ENCODE measurements at regions of chr17 and their contacts with region 1.

Region 1: DNA sequence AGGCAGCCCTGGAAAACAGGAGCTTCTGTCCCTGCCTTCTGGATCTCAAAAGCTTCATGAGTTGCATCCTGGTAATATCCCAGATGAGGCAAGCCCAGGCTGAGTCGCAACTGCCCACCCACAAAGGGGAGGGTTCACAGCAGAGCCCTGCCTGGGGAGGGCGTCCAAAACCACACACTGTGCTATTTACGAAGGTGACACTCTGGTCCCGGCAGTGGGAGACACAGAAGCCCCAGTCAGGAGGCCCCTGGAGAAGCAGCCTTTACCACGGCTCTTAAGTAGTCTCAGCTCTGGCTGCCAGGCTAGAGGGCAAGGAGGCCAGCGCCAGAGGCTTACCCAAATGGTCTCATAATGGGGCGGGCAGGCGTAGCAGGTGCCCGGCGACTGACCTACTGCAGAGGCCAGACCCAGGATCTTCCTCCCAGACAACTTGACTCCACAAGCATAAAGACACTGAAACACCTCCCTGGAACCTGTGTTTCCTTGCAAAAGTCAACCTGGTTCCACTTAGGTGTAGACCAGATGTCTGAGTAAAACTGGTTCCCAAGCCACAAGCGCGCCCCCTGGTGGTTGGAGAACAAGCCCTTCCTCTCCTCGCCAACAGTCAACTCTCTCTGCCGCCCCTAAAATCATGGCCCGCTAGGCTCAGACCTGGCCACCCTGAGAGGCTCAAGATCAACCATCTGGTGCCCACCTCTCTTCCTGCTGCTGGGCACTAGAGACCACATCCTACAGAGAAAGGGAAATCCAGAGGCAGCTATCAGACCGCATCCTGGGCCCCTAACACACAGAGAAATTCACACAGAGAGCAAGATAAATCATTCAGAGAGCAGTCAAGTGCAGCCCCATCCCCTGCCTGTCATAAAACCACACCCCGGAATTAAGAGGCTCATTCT is 5.2 kb downstream of the AXIN2 start:
- DNase-seq: peak; percentile 85 to 96 (median 92)
- ATAC-seq: peak; percentile 43
- H3K4me3 ChIP-seq: peak overlapping the region; percentile 66
- H3K4me3 Mint-ChIP-seq: no peak overlapping the region
- H3K27ac ChIP-seq: peak overlapping the region; percentile 31 to 36
- H3K27ac Mint-ChIP-seq: no peak overlapping the region
- H3K4me1 ChIP-seq: peaks cover 12% of the 10 kb centered on the region
- H3K4me1 Mint-ChIP-seq: peaks cover 18% of the 10 kb centered on the region
- H3K27me3 ChIP-seq: no peaks in the 10 kb centered on the region
- H3K27me3 Mint-ChIP-seq: no peaks in the 10 kb centered on the region
- CTCF ChIP-seq: peak; percentile 81

Region 2: GRCh38 chr17:65334406-65334805 is 221.9 kb before region 1 on chr17:
- CTCF ChIA-PET with region 1: no interaction called
- POLR2A ChIA-PET with region 1: no interaction called
- intact Hi-C with region 1: no loop called
- DNase-seq: no peak
- ATAC-seq: no peak
- H3K4me3 ChIP-seq: no peak overlapping the region
- H3K4me3 Mint-ChIP-seq: no peak overlapping the region
- H3K27ac ChIP-seq: no peak overlapping the region
- H3K27ac Mint-ChIP-seq: no peak overlapping the region
- H3K4me1 ChIP-seq: no peaks in the 10 kb centered on the region
- H3K4me1 Mint-ChIP-seq: no peaks in the 10 kb centered on the region
- H3K27me3 ChIP-seq: peaks cover 4% of the 10 kb centered on the region in 2 experiments
- H3K27me3 Mint-ChIP-seq: peaks cover 14% of the 10 kb centered on the region
- CTCF ChIP-seq: no peak

Region 3: DNA sequence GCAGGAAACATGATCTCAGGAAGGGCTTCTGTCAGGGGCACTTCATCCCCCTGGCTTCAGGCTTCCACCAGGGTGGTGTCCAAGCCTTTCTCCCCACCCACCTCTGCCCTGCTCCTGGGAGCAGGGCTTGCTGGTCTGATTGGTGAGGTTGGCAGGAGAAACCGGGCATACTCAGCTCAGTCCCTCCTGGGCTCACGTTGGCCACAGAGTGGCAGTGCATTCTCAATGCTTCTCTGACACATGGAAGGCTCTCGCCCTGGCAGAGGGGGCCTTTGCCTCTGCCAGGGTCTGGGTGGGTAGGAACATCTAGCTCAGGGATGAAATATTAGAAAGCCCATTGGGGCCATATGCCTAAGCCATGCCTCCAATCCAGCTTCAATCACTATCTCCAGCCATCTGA is 137.6 kb before region 1 on chr17:
- CTCF ChIA-PET with region 1: no interaction called
- POLR2A ChIA-PET with region 1: no interaction called
- intact Hi-C with region 1: loop called in 1 of 2 experiments (anchors 1 kb)
- DNase-seq: no peak
- ATAC-seq: no peak
- H3K4me3 ChIP-seq: no peak overlapping the region
- H3K4me3 Mint-ChIP-seq: no peak overlapping the region
- H3K27ac ChIP-seq: no peak overlapping the region
- H3K27ac Mint-ChIP-seq: no peak overlapping the region
- H3K4me1 ChIP-seq: no peaks in the 10 kb centered on the region
- H3K4me1 Mint-ChIP-seq: no peaks in the 10 kb centered on the region
- H3K27me3 ChIP-seq: no peaks in the 10 kb centered on the region
- H3K27me3 Mint-ChIP-seq: peaks cover 11% of the 10 kb centered on the region
- CTCF ChIP-seq: no peak

Region 4: DNA sequence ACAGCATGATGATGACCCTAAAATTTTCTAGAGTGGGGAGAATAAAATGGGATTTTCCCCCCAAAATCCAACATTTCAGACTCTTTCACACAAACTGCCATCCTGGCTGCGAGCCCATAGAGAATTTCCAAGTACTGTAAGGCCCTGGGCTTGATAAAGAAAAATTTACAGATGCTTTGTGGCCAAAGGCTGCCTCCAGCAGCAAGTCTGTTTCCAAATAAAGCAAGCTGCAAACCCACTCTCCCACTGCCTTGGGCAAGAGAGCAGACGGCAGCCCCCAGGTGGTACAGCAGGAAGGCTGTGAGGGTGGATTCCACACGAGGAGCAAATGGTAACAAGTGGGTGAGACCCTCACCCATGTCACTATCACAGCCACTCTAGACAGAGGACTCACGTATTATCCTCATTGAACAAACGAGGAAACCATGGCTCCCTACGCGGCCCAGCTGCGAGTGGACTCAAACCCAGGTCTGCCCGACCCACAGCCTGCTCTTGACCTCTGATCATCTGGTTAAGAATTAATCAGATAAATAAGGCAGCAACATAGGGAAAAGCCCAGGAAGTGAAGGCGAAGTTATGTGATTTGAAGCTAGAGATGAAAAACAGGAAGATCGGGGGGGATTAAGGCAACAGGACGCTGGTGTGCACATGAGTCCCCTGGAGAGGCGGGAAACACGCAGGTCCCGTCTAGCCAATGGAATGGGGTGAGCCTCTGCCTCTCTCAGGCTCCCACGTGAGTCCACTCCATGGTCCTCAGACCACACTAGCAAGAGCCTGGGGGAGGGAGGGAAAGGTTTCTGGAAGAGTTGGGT is 32.2 kb before region 1 on chr17:
- CTCF ChIA-PET with region 1: interaction called, 3 read pairs
- POLR2A ChIA-PET with region 1: interaction called, 3 read pairs
- intact Hi-C with region 1: loop called (anchors 1 to 2 kb)
- DNase-seq: peak in 3 of 14 experiments; percentile 8 to 28 (median 27)
- ATAC-seq: peak; percentile 13
- H3K4me3 ChIP-seq: no peak overlapping the region
- H3K4me3 Mint-ChIP-seq: peak overlapping the region; percentile 26
- H3K27ac ChIP-seq: peak overlapping the region; percentile 16 to 36
- H3K27ac Mint-ChIP-seq: peak overlapping the region; percentile 86
- H3K4me1 ChIP-seq: peaks cover 32% of the 10 kb centered on the region
- H3K4me1 Mint-ChIP-seq: peaks cover 49% of the 10 kb centered on the region
- H3K27me3 ChIP-seq: no peaks in the 10 kb centered on the region
- H3K27me3 Mint-ChIP-seq: no peaks in the 10 kb centered on the region
- CTCF ChIP-seq: no peak

Region 5: DNA sequence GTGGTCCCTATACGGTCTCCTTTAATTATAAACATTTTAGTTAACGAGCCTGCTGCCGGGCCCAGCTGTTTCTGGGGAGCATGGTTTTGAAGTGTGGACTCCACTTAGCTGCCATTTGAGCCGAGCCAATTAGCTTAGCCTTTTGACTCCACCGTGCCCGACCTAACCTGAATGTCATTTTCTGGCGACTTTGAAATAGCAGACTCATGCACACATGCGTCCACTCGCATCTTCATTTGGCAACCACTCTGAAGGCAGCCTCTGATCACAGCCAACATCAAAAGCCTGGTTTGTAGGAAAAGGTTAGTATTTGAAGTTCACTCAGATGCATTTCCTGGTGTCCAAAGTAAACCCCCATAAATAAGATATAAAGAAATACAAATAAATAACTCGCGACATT is 11.6 kb before region 1 on chr17:
- CTCF ChIA-PET with region 1: interaction called, 17 read pairs
- POLR2A ChIA-PET with region 1: interaction called, 21 read pairs
- intact Hi-C with region 1: loop called in 1 of 2 experiments (anchors 2 kb)
- DNase-seq: no peak
- ATAC-seq: no peak
- H3K4me3 ChIP-seq: no peak overlapping the region
- H3K4me3 Mint-ChIP-seq: no peak overlapping the region
- H3K27ac ChIP-seq: no peak overlapping the region
- H3K27ac Mint-ChIP-seq: peak overlapping the region; percentile 66
- H3K4me1 ChIP-seq: peaks cover 28% of the 10 kb centered on the region
- H3K4me1 Mint-ChIP-seq: peaks cover 85% of the 10 kb centered on the region
- H3K27me3 ChIP-seq: no peaks in the 10 kb centered on the region
- H3K27me3 Mint-ChIP-seq: no peaks in the 10 kb centered on the region
- CTCF ChIP-seq: no peak

Region 6: GRCh38 chr17:65618516-65618915 is 62.3 kb after region 1 on chr17:
- CTCF ChIA-PET with region 1: no interaction called
- POLR2A ChIA-PET with region 1: no interaction called
- intact Hi-C with region 1: no loop called
- DNase-seq: no peak
- ATAC-seq: no peak
- H3K4me3 ChIP-seq: no peak overlapping the region
- H3K4me3 Mint-ChIP-seq: no peak overlapping the region
- H3K27ac ChIP-seq: no peak overlapping the region
- H3K27ac Mint-ChIP-seq: no peak overlapping the region
- H3K4me1 ChIP-seq: no peaks in the 10 kb centered on the region
- H3K4me1 Mint-ChIP-seq: no peaks in the 10 kb centered on the region
- H3K27me3 ChIP-seq: no peaks in the 10 kb centered on the region
- H3K27me3 Mint-ChIP-seq: no peaks in the 10 kb centered on the region
- CTCF ChIP-seq: no peak

Region 7: DNA sequence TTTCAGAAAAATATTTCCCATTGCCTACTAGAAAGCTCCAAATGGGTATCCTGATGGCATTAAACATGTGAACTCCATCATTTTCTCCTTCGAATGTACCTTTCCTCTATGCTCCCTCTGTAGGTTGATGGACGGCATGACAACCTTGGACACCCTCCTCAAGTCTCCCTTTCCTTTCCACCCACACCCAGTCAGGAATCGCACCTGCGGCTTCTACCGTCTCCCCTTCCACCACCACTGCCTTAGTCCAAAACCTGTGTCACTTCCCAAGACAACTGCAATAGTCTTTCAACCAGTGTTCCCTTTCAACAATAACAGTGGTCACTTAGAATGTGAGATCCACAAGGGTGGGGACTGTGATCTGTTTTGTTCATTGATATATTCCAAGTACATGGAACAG is 238.3 kb after region 1 on chr17:
- CTCF ChIA-PET with region 1: interaction called, 4 read pairs
- POLR2A ChIA-PET with region 1: interaction called, 5 read pairs
- intact Hi-C with region 1: loop called (anchors 5 kb)
- DNase-seq: peak in 4 of 14 experiments; percentile 9 to 47 (median 36)
- ATAC-seq: peak; percentile 56
- H3K4me3 ChIP-seq: no peak overlapping the region
- H3K4me3 Mint-ChIP-seq: no peak overlapping the region
- H3K27ac ChIP-seq: no peak overlapping the region
- H3K27ac Mint-ChIP-seq: no peak overlapping the region
- H3K4me1 ChIP-seq: no peaks in the 10 kb centered on the region
- H3K4me1 Mint-ChIP-seq: no peaks in the 10 kb centered on the region
- H3K27me3 ChIP-seq: no peaks in the 10 kb centered on the region
- H3K27me3 Mint-ChIP-seq: no peaks in the 10 kb centered on the region
- CTCF ChIP-seq: peak; percentile 60

Measured in CD4-positive, alpha-beta T cell (primary cell).